GM12878 (cell line): ENCODE measurements at regions of chr1 and their contacts with region 1.

Region 1: GRCh38 chr1:167687919-167688519 is 33.8 kb upstream of the MPZL1 start:
- DNase-seq: peak; percentile 80
- ATAC-seq: peak; percentile 90
- H3K4me3 ChIP-seq: no peak overlapping the region
- H3K27ac ChIP-seq: peak overlapping the region; percentile 30; the same call in 1 of the 2 replicates
- H3K4me1 ChIP-seq: peaks cover 9% of the 10 kb centered on the region
- H3K27me3 ChIP-seq: no peaks in the 10 kb centered on the region
- CTCF ChIP-seq: peak; percentile 83 to 94 (median 93)
- EP300 ChIP-seq: no peak
- POLR2A ChIP-seq: no peak
- RAD21 ChIP-seq: peak; percentile 99

Region 2: GRCh38 chr1:167542109-167543032 is 145.6 kb before region 1 on chr1:
- CTCF ChIA-PET with region 1: interaction called, 26 read pairs
- POLR2A ChIA-PET with region 1: interaction called, 8 read pairs
- RAD21 ChIA-PET with region 1: interaction called, 14 read pairs
- SMC1A ChIA-PET with region 1: interaction called, 10 read pairs
- in situ Hi-C with region 1: no loop called
- intact Hi-C with region 1: no loop called
- DNase-seq: no peak
- ATAC-seq: peak; percentile 32
- H3K4me3 ChIP-seq: peak overlapping the region; percentile 23; the same call in 1 of the 2 replicates
- H3K27ac ChIP-seq: peak overlapping the region; percentile 45; the same call in 1 of the 2 replicates
- H3K4me1 ChIP-seq: peaks cover 59% of the 10 kb centered on the region
- H3K27me3 ChIP-seq: no peaks in the 10 kb centered on the region
- CTCF ChIP-seq: no peak
- EP300 ChIP-seq: no peak
- POLR2A ChIP-seq: no peak
- RAD21 ChIP-seq: no peak

Region 3: DNA sequence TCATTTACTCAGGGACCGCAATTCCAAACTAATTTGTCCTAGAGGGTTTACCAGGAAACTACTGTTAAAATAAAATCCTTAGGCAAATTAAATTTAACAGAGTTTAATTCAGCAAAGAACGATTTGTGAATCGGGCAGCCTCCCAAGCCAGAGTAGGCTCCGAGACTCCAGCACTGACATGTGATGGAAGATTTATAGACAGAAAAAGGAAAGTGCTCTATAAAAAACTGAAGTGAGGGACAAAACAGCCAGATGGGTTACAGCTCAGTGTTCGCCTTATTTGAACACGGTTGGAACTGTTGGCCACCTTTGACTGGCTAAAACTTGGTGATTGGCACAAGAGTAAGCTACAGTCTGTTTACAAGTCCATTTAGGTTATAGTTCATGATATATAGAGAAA is 93.2 kb before region 1 on chr1:
- CTCF ChIA-PET with region 1: interaction called, 255 read pairs
- POLR2A ChIA-PET with region 1: interaction called, 28 read pairs
- RAD21 ChIA-PET with region 1: interaction called, 182 read pairs
- SMC1A ChIA-PET with region 1: interaction called, 215 read pairs
- in situ Hi-C with region 1: loop called (anchors 5 kb)
- intact Hi-C with region 1: loop called (anchors 1 kb)
- DNase-seq: no peak
- ATAC-seq: no peak
- H3K4me3 ChIP-seq: no peak overlapping the region
- H3K27ac ChIP-seq: no peak overlapping the region
- H3K4me1 ChIP-seq: peaks cover 2% of the 10 kb centered on the region; the same call in 1 of the 2 replicates
- H3K27me3 ChIP-seq: no peaks in the 10 kb centered on the region
- CTCF ChIP-seq: no peak
- EP300 ChIP-seq: no peak
- POLR2A ChIP-seq: no peak
- RAD21 ChIP-seq: no peak

Region 4: DNA sequence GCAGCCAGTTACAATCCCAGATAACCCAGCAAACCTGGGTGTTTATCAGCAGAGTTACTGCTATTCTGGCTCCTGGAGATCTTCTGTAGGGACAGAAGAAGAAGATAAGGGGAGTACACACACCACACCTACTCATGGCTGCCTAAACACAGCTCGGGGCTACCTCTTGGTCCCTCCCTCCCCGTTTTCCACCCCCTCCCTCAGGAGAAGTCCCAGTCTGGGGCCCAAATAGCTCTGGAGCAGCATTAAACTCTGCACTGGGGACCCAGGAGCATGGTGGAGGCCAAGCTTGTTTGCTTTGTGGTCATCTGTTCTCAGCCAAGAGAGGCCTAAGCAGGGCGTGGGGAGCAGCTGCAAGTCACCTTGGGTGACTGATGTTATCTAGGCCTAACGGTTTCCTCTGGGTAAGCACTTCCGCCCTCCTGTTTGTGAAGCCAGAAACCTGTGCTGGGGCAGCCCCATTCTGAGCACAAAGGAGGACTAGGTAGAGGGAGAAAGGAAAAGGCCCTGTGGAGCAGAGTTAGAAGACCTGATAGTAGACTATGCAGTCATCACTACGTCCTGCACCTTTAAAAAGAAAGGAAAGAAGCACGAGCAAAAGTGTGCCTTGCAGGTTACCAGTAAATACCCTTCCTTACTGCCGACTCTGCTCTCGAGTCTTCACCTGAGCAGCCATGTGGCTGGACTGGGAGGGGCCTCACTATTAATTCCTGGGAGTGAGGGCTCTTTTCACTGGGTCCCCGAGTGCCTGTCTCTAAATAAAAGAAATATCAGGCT is 60.0 kb before region 1 on chr1:
- CTCF ChIA-PET with region 1: interaction called, 67 read pairs
- POLR2A ChIA-PET with region 1: interaction called, 15 read pairs
- RAD21 ChIA-PET with region 1: interaction called, 61 read pairs
- SMC1A ChIA-PET with region 1: interaction called, 170 read pairs
- in situ Hi-C with region 1: no loop called
- intact Hi-C with region 1: loop called (anchors 2 kb)
- DNase-seq: peak; percentile 89
- ATAC-seq: peak; percentile 77
- H3K4me3 ChIP-seq: peak overlapping the region; percentile 79
- H3K27ac ChIP-seq: peak overlapping the region; percentile 94
- H3K4me1 ChIP-seq: peaks cover 26% of the 10 kb centered on the region
- H3K27me3 ChIP-seq: no peaks in the 10 kb centered on the region
- CTCF ChIP-seq: no peak
- EP300 ChIP-seq: peak; percentile 80 to 84
- POLR2A ChIP-seq: peak; percentile 89
- RAD21 ChIP-seq: no peak

Region 5: DNA sequence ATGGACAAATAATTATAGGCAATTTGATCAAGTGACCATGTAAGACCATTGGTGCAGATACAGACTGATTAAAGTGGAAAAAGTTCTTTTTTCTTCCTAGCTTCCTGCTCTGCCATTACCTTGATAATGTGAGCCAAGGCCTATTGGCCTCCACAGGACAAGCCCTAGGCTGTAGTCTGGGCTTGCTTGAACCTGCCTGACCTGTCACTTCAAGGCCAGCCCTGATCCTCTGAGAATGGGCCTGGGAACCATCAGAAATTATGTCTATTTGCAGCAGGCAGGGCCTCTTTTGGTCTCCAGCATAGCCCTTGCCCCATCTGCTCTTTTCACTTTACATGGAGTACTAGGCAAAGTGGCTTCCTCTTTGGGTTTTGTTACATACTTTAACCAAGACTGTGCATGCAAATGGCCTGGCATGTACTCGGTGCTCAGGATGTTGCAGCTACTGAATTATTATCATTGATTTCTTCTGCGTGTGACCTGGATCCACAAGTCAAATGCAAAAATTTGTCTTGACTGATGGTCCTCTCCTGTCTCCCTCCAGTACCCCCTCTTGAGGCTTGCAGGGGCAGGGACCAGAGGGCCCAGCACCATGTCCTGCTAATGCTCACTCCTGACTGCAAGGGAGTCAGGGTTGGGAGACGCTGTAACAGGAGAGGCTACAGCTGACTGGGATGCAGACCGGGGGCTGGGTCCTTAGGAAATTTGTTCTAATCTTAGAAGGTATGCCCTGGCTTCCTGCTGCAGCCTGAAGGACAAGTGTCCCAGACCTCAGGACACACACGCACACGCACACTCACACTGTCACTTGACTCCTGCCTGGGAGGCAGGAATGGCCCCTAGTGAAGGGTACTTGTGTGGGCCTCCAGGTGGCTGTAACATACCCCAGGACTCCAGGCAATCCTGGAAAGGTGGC is 18.6 kb before region 1 on chr1:
- CTCF ChIA-PET with region 1: interaction called, 17 read pairs
- POLR2A ChIA-PET with region 1: interaction called, 3 read pairs
- RAD21 ChIA-PET with region 1: interaction called, 7 read pairs
- SMC1A ChIA-PET with region 1: interaction called, 37 read pairs
- in situ Hi-C with region 1: no loop called
- intact Hi-C with region 1: no loop called
- DNase-seq: peak; percentile 66
- ATAC-seq: peak; percentile 73
- H3K4me3 ChIP-seq: no peak overlapping the region
- H3K27ac ChIP-seq: peak overlapping the region; percentile 71
- H3K4me1 ChIP-seq: peaks cover 79% of the 10 kb centered on the region
- H3K27me3 ChIP-seq: no peaks in the 10 kb centered on the region
- CTCF ChIP-seq: 0 out of 6 replicates have a peak, but pooled peaks of 1 of the 3 experiments have one; percentile 3
- EP300 ChIP-seq: no peak
- POLR2A ChIP-seq: no peak
- RAD21 ChIP-seq: no peak

Region 6: DNA sequence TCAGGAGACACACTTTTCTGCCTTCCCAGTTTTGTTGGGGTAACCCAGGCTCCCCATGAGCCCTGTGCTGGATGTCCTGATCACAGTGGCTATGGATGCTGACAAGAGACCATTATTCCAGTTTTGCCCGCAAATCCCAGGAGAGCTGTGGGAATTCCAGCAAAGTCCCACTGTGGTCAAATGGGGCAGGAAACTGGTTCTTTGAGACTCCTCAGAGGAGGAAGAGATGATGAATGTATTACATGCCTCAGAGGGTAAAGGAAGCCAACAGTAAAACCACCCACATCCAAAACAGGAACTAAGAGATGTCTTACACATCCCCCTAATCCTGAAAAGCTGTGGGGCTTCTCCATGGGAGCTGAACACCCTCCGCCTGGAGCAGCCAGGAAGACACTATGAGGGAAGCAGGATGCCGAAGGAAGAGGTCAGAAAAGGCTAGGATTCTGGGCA is 20.9 kb after region 1 on chr1:
- CTCF ChIA-PET with region 1: interaction called, 28 read pairs
- POLR2A ChIA-PET with region 1: interaction called, 3 read pairs
- RAD21 ChIA-PET with region 1: interaction called, 18 read pairs
- SMC1A ChIA-PET with region 1: interaction called, 29 read pairs
- in situ Hi-C with region 1: no loop called
- intact Hi-C with region 1: no loop called
- DNase-seq: peak; percentile 63
- ATAC-seq: peak; percentile 66
- H3K4me3 ChIP-seq: no peak overlapping the region; the same call in 1 of the 2 replicates
- H3K27ac ChIP-seq: peak overlapping the region; percentile 76
- H3K4me1 ChIP-seq: peaks cover 53% of the 10 kb centered on the region
- H3K27me3 ChIP-seq: no peaks in the 10 kb centered on the region
- CTCF ChIP-seq: no peak
- EP300 ChIP-seq: 0 out of 4 replicates have a peak, but pooled peaks of 1 of the 2 experiments have one; percentile 10
- POLR2A ChIP-seq: no peak
- RAD21 ChIP-seq: no peak